Activated B cell treated with CpG ODN at 0.5 μM for 24 hours (primary cell): ENCODE measurements at regions of chr7 and their contacts with region 1.

Region 1: DNA sequence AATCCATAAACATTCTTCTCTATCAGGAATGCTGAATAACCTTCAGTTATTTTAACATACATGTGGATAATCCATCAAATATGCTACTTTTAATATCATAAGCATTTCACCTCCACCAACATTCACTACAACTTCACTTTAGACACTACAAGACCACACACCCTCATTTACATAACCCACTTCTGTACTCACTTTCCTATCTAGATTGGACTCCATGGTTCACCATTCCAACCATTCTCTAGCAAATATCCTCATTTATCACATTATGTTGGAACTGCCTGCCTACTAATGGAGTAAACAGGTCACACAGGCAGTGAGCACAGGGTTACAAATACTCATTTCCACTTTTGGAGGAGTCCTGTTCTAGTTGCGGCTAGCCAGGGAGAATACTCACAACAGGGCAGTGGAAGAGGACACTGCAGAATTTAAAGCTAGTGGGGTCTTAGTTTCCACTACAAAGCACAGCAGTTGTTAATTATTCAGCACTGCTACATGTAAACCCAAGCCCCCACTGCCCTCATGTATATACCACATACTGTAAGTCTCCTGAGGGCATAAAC is 18.4 kb downstream of the SNX13 start:
- DNase-seq: no peak
- ATAC-seq: no peak
- H3K4me3 Mint-ChIP-seq: no peak overlapping the region
- H3K27ac Mint-ChIP-seq: no peak overlapping the region
- H3K4me1 Mint-ChIP-seq: peaks cover 55% of the 10 kb centered on the region
- H3K27me3 Mint-ChIP-seq: no peaks in the 10 kb centered on the region
- CTCF ChIP-seq: no peak

Region 2: GRCh38 chr7:17523813-17524741 is 397.9 kb before region 1 on chr7:
- CTCF ChIA-PET with region 1: no interaction called
- POLR2A ChIA-PET with region 1: no interaction called
- intact Hi-C with region 1: no loop called
- DNase-seq: no peak
- ATAC-seq: no peak
- H3K4me3 Mint-ChIP-seq: no peak overlapping the region
- H3K27ac Mint-ChIP-seq: no peak overlapping the region
- H3K4me1 Mint-ChIP-seq: no peaks in the 10 kb centered on the region
- H3K27me3 Mint-ChIP-seq: no peaks in the 10 kb centered on the region
- CTCF ChIP-seq: no peak

Region 3: DNA sequence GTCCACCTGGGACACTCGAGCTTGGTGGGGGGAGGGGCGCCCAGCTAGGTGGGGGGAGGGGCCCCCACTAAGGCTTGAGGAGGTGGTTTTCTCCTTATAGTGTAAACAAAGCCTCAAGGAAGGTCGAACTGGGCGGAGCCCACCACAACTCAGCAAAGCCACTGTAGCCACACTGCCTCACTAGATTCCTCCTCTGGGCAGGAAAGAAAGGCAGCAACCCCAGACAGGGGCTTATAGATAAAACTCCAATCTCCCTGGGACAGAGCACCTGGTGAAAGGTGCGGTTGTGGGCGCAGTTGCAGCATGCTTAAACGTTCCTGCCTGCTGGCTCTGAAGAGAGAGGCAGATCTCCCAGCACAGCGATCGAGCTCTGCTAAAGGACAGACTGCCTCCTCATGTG is 114.7 kb before region 1 on chr7:
- CTCF ChIA-PET with region 1: no interaction called
- POLR2A ChIA-PET with region 1: no interaction called
- intact Hi-C with region 1: no loop called
- DNase-seq: no peak
- ATAC-seq: no peak
- H3K4me3 Mint-ChIP-seq: no peak overlapping the region
- H3K27ac Mint-ChIP-seq: no peak overlapping the region
- H3K4me1 Mint-ChIP-seq: no peaks in the 10 kb centered on the region
- H3K27me3 Mint-ChIP-seq: no peaks in the 10 kb centered on the region
- CTCF ChIP-seq: no peak

Region 4: GRCh38 chr7:17934094-17934493 is 12.2 kb after region 1 on chr7:
- CTCF ChIA-PET with region 1: no interaction called
- POLR2A ChIA-PET with region 1: interaction called, 3 read pairs
- intact Hi-C with region 1: loop called (anchors 1 kb)
- DNase-seq: no peak
- ATAC-seq: no peak
- H3K4me3 Mint-ChIP-seq: peak overlapping the region; percentile 24
- H3K27ac Mint-ChIP-seq: peak overlapping the region; percentile 59
- H3K4me1 Mint-ChIP-seq: peaks cover 75% of the 10 kb centered on the region
- H3K27me3 Mint-ChIP-seq: no peaks in the 10 kb centered on the region
- CTCF ChIP-seq: no peak